Mammary epithelial cell (primary cell): ENCODE measurements at regions of chrX and their contacts with region 1.

Region 1: GRCh38 chrX:2640275-2641150 is 50.6 kb upstream of the CD99 start:
- DNase-seq: no peak
- H3K4me3 ChIP-seq: no peak overlapping the region
- H3K27ac ChIP-seq: no peak overlapping the region
- H3K4me1 ChIP-seq: no peaks in the 10 kb centered on the region
- H3K27me3 ChIP-seq: no peaks in the 10 kb centered on the region
- CTCF ChIP-seq: no peak

Region 2: DNA sequence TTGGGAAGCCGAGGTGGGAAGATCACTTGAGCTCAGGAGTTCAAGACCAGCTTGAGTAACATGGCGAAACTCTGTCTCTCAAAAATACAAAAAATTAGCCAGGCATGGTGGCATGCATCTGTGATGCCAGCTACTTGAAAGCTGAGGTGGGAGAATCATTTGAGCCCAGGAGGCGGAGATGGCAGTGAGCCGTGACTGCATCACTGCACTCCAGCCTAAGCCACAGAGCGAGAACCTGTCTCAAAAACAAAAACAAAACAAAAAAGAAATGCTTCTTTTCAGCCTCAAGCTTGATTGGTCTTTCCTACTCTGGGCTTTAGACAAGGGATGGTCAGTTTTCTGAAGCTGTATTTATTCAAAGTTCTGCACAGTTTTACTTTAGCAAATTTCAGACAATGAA is 123.9 kb before region 1 on chrX:
- CTCF ChIA-PET with region 1: no interaction called
- dilution Hi-C with region 1: no loop called
- in situ Hi-C with region 1: no loop called
- intact Hi-C with region 1: no loop called
- DNase-seq: no peak
- H3K4me3 ChIP-seq: no peak overlapping the region
- H3K27ac ChIP-seq: no peak overlapping the region
- H3K4me1 ChIP-seq: no peaks in the 10 kb centered on the region
- H3K27me3 ChIP-seq: no peaks in the 10 kb centered on the region
- CTCF ChIP-seq: no peak

Region 3: DNA sequence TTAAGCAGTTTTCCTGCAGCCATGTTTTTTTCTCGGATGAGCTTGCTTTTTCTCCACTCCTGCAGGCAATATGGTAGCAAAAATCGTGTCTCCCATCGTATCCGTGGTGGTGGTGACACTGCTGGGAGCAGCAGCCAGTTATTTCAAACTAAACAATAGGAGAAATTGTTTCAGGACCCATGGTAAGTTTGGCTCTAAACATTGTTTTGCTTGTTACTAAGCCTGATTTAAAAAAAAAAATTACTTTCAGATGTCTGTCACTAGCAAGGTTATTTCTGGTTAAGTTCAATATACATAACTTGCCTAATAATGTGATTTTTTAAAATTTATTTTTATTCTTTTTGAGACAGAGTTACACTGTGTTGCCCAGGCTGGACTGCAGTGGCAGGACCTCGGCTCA is 170.8 kb after region 1 on chrX:
- CTCF ChIA-PET with region 1: no interaction called
- dilution Hi-C with region 1: no loop called
- in situ Hi-C with region 1: loop called in 1 of 2 experiments (anchors 10 kb)
- intact Hi-C with region 1: loop called (anchors 1 kb)
- DNase-seq: no peak
- H3K4me3 ChIP-seq: no peak overlapping the region
- H3K27ac ChIP-seq: peak overlapping the region; percentile 64
- H3K4me1 ChIP-seq: no peaks in the 10 kb centered on the region
- H3K27me3 ChIP-seq: no peaks in the 10 kb centered on the region
- CTCF ChIP-seq: no peak

Region 4: DNA sequence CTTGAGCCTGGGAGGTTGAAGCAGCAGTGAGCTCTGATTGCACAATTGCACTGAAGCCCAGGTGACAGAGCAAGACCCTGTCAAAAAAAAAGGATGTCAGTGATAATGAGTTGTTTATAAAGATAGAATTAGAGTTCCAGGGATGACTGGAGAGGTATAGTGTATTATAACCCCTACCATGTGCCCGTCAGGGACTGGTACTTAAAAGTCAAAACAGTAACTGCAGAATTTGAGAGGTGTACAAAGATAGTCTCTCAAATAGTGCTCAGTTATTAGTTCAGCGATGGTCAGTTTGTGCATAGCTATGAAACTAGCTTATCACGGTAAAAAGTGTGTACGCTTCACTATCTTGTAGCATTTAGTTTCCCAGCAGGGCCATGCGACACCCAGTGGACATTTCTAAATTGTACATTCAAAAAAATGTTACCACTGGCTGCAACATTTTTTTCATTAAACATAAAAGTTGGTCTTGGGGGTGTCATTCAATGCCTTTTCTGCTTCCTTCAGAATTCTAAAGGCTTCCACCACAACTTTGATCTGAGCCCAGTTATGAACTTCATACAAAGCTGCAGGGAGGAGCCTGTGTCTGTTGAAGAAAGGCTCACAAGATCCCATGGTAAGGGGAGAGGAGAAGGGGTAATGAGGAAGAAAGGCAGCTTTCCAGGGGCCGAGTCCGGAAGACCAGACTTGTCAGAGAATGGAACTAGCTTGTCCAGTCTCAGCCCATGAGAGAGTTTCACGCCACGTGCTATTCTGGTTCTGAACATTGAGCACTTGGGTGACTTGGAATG is 179.0 kb after region 1 on chrX:
- CTCF ChIA-PET with region 1: no interaction called
- dilution Hi-C with region 1: no loop called
- in situ Hi-C with region 1: loop called in 1 of 2 experiments (anchors 10 kb)
- intact Hi-C with region 1: loop called (anchors 1 kb)
- DNase-seq: peak; percentile 12
- H3K4me3 ChIP-seq: no peak overlapping the region
- H3K27ac ChIP-seq: no peak overlapping the region
- H3K4me1 ChIP-seq: no peaks in the 10 kb centered on the region
- H3K27me3 ChIP-seq: no peaks in the 10 kb centered on the region
- CTCF ChIP-seq: peak in 1 of 2 donors; percentile 25